ENCODE measurements at regions of chr1 and their contacts with region 1.

Region 1: GRCh38 chr1:28581536-28582247 is 10.4 kb upstream of the RAB42 start:
- DNase-seq: peak; percentile 91 to 92
- H3K4me3 ChIP-seq: peak overlapping the region; percentile 73
- H3K4me3 Mint-ChIP-seq: peak overlapping the region; percentile 85
- H3K27ac Mint-ChIP-seq: peak overlapping the region; percentile 88
- H3K4me1 ChIP-seq: peaks cover 5% of the 10 kb centered on the region; the same call in 1 of the 2 replicates
- H3K4me1 Mint-ChIP-seq: peaks cover 11% of the 10 kb centered on the region
- H3K27me3 ChIP-seq: no peaks in the 10 kb centered on the region
- H3K27me3 Mint-ChIP-seq: no peaks in the 10 kb centered on the region
- CTCF ChIP-seq: no peak

Region 2: DNA sequence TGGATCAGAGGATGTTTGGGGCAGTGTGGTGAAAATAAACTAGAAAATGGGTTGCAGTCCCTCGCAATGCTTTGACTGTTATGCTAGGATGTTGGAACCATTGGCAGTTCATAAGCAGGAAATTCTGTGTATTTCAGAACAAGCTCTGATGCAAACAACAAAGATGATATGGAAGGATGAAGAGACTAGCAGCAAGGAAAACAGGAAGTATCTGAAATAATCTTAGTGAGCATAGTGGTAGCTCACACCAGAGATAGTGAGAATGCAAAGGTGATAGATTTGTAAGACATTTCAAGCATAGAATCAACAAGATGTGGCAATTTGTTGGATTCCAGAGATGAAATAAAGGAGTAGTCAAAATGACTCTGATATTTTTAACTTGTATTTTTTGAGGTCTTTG is 87.0 kb before region 1 on chr1:
- CTCF ChIA-PET with region 1: no interaction called
- POLR2A ChIA-PET with region 1: no interaction called
- intact Hi-C with region 1: no loop called
- DNase-seq: no peak
- H3K4me3 ChIP-seq: no peak overlapping the region
- H3K4me3 Mint-ChIP-seq: no peak overlapping the region
- H3K27ac Mint-ChIP-seq: no peak overlapping the region
- H3K4me1 ChIP-seq: no peaks in the 10 kb centered on the region
- H3K4me1 Mint-ChIP-seq: no peaks in the 10 kb centered on the region
- H3K27me3 ChIP-seq: no peaks in the 10 kb centered on the region
- H3K27me3 Mint-ChIP-seq: no peaks in the 10 kb centered on the region
- CTCF ChIP-seq: no peak

Region 3: GRCh38 chr1:28518000-28518744 is 63.5 kb before region 1 on chr1:
- CTCF ChIA-PET with region 1: interaction called, 5 read pairs
- POLR2A ChIA-PET with region 1: interaction called, 12 read pairs
- intact Hi-C with region 1: loop called (anchors 2 kb)
- DNase-seq: peak; percentile 90 to 91
- H3K4me3 ChIP-seq: peak overlapping the region; percentile 78
- H3K4me3 Mint-ChIP-seq: peak overlapping the region; percentile 87
- H3K27ac Mint-ChIP-seq: peak overlapping the region; percentile 91
- H3K4me1 ChIP-seq: no peaks in the 10 kb centered on the region
- H3K4me1 Mint-ChIP-seq: peaks cover 10% of the 10 kb centered on the region
- H3K27me3 ChIP-seq: no peaks in the 10 kb centered on the region
- H3K27me3 Mint-ChIP-seq: no peaks in the 10 kb centered on the region
- CTCF ChIP-seq: peak; percentile 78 to 87

Region 4: DNA sequence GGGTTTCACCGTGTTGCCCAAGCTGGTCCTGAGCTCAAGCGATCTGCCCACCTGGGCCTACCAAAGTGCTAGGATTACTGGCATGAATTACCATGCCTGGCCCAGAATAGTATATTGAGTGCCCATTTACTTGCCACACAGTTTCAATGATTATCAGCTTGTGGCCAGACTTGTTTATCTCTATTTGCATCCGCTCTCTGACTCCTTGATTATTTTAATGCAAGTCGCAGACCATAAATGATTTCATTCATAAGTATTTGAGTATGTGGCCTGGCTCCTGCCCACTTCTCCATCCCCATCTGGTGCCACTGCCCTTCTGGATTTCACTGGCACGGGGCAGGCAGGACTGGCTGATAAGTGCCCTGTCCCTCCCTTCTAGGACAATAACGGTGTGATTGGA is 47.0 kb before region 1 on chr1:
- CTCF ChIA-PET with region 1: no interaction called
- POLR2A ChIA-PET with region 1: no interaction called
- intact Hi-C with region 1: no loop called
- DNase-seq: no peak
- H3K4me3 ChIP-seq: no peak overlapping the region
- H3K4me3 Mint-ChIP-seq: no peak overlapping the region
- H3K27ac Mint-ChIP-seq: no peak overlapping the region
- H3K4me1 ChIP-seq: no peaks in the 10 kb centered on the region
- H3K4me1 Mint-ChIP-seq: no peaks in the 10 kb centered on the region
- H3K27me3 ChIP-seq: no peaks in the 10 kb centered on the region
- H3K27me3 Mint-ChIP-seq: no peaks in the 10 kb centered on the region
- CTCF ChIP-seq: no peak

Region 5: GRCh38 chr1:28552758-28553663 is 28.7 kb before region 1 on chr1 and contains the start of gene TRNAU1AP:
- CTCF ChIA-PET with region 1: interaction called, 4 read pairs
- POLR2A ChIA-PET with region 1: interaction called, 15 read pairs
- intact Hi-C with region 1: loop called (anchors 2 kb)
- DNase-seq: peak; percentile 92 to 94
- H3K4me3 ChIP-seq: peak within 1 kb of the TSS; percentile 70
- H3K4me3 Mint-ChIP-seq: peak within 1 kb of the TSS; percentile 85
- H3K27ac Mint-ChIP-seq: peak within 1 kb of the TSS; percentile 84
- H3K4me1 ChIP-seq: no peaks in the 10 kb centered on the region
- H3K4me1 Mint-ChIP-seq: no peaks in the 10 kb centered on the region
- H3K27me3 ChIP-seq: no peaks in the 10 kb centered on the region
- H3K27me3 Mint-ChIP-seq: no peaks in the 10 kb centered on the region
- CTCF ChIP-seq: no peak
- total RNA-seq, gene TRNAU1AP: 23.1 and 25.1 TPM in 2 replicates

Region 6: DNA sequence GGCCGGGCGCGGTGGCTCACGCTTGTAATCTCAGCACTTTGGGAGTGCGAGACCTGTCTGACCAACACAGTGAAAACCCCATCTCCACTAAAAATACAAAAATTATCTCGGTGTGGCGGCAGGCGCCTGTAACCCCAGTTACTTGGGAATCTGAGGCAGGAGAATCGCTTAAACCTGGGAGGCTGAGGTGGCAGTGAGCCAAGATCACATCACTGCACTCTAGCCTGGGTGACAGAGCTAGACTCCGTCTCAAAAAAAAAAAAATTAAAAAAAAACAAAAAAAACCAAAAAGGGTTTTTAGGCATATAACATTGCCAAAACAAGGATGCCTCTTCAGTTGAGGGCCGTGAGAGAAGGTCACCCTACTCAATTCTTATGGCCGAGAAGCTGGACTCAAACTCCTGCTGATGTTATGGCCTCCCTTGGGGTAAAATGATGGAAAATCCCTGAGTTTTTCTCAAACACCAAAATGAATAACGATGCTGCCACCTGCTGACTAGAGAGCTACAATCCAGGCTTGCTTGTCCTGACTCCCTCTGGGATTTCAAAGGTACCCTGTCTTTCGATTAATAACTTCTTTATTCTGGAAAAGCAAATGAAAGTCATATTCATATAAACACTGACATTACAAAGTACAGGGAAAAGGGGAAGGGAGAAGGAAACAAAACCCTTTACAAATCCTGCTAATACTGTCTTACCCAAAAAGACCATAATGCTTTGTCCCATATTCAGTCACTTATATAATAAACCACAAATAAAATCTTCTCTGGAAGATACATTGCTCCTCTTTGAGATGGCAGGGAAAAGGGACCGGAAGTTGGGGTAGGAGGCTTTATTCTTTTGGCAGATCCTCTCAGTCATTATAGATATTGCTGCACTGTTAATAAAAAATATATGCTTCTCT is 21.1 kb after region 1 on chr1:
- CTCF ChIA-PET with region 1: interaction called, 6 read pairs
- POLR2A ChIA-PET with region 1: interaction called, 22 read pairs
- intact Hi-C with region 1: no loop called
- DNase-seq: peak; percentile 55 to 67
- H3K4me3 ChIP-seq: no peak overlapping the region
- H3K4me3 Mint-ChIP-seq: no peak overlapping the region
- H3K27ac Mint-ChIP-seq: no peak overlapping the region
- H3K4me1 ChIP-seq: peaks cover 20% of the 10 kb centered on the region
- H3K4me1 Mint-ChIP-seq: no peaks in the 10 kb centered on the region
- H3K27me3 ChIP-seq: no peaks in the 10 kb centered on the region
- H3K27me3 Mint-ChIP-seq: no peaks in the 10 kb centered on the region
- CTCF ChIP-seq: peak; percentile 40 to 52